PC-9 (cell line): ENCODE measurements at regions of chr17 and their contacts with region 1.

Region 1: GRCh38 chr17:5111402-5112204 is at the start of gene ZNF232:
- DNase-seq: peak; percentile 86 to 97
- H3K4me3 ChIP-seq: peak within 1 kb of the TSS; percentile 86
- H3K27ac ChIP-seq: peak within 1 kb of the TSS; percentile 27; the same call in 1 of the 2 replicates
- H3K4me1 ChIP-seq: peaks cover 8% of the 10 kb centered on the region; the same call in 1 of the 2 replicates
- H3K27me3 ChIP-seq: no peaks in the 10 kb centered on the region
- CTCF ChIP-seq: no peak
- total RNA-seq, gene ZNF232: 10.3 TPM in 2 replicates

Region 2: GRCh38 chr17:5078106-5079028 is 33.2 kb before region 1 on chr17 and contains the start of gene ZFP3:
- CTCF ChIA-PET with region 1: no interaction called
- POLR2A ChIA-PET with region 1: no interaction called
- intact Hi-C with region 1: loop called (anchors 1 kb)
- DNase-seq: peak; percentile 58 to 87
- H3K4me3 ChIP-seq: peak within 1 kb of the TSS; percentile 61
- H3K27ac ChIP-seq: no peak within 1 kb of the TSS
- H3K4me1 ChIP-seq: no peaks in the 10 kb centered on the region
- H3K27me3 ChIP-seq: peaks cover 3% of the 10 kb centered on the region; the same call in 1 of the 2 replicates
- CTCF ChIP-seq: no peak
- total RNA-seq, gene ZFP3: 2.3 and 4.5 TPM in 2 replicates

Region 3: DNA sequence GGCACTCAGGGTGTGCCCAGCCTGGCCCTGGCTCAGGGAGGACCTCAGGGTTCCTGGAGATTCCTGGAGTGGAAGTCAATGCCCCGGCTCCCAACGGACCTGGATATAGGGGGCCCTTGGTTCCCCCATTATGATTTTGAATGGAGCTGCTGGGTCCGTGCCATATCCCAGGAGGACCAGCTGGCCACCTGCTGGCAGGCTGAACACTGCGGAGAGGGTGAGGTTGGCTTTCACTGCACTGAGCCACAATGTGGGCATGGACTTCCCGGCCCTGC is 27.8 kb after region 1 on chr17:
- CTCF ChIA-PET with region 1: no interaction called
- POLR2A ChIA-PET with region 1: no interaction called
- intact Hi-C with region 1: no loop called
- DNase-seq: no peak
- H3K4me3 ChIP-seq: no peak overlapping the region
- H3K27ac ChIP-seq: no peak overlapping the region
- H3K4me1 ChIP-seq: no peaks in the 10 kb centered on the region
- H3K27me3 ChIP-seq: peaks cover 74% of the 10 kb centered on the region
- CTCF ChIP-seq: no peak

Region 4: GRCh38 chr17:5191541-5192417 is 80.2 kb after region 1 on chr17 and contains the start of gene ZNF594:
- CTCF ChIA-PET with region 1: no interaction called
- POLR2A ChIA-PET with region 1: interaction called, 3 read pairs
- intact Hi-C with region 1: loop called (anchors 1 kb)
- DNase-seq: peak; percentile 89 to 98
- H3K4me3 ChIP-seq: peak within 1 kb of the TSS; percentile 66
- H3K27ac ChIP-seq: peak within 1 kb of the TSS; percentile 22; the same call in 1 of the 2 replicates
- H3K4me1 ChIP-seq: peaks cover 5% of the 10 kb centered on the region; the same call in 1 of the 2 replicates
- H3K27me3 ChIP-seq: no peaks in the 10 kb centered on the region
- CTCF ChIP-seq: peak; percentile 71
- total RNA-seq, gene ZNF594: 14.0 and 18.4 TPM in 2 replicates

Region 5: DNA sequence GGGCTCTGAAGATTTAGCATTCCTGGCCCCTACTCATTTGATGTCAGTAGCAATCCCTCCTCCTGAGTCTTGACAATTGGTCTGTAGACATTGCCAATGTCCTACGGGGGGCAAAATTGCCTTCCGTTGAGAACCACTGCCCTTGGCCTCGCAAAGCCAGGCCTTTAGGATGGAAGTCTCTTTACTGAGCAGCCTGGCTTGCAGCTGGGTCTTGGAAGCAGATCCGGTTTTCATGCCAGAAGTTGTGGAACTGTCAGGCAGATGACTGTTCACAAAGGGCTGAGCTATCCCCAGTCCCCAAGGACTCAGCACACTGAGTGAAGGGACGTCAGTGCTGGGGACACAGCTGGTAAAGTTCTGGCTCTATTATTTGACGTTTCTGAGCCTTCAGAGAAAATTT is 1041.8 kb after region 1 on chr17:
- CTCF ChIA-PET with region 1: no interaction called
- POLR2A ChIA-PET with region 1: interaction called, 33 read pairs
- intact Hi-C with region 1: no loop called
- DNase-seq: no peak
- H3K4me3 ChIP-seq: no peak overlapping the region
- H3K27ac ChIP-seq: no peak overlapping the region
- H3K4me1 ChIP-seq: no peaks in the 10 kb centered on the region
- H3K27me3 ChIP-seq: peaks cover 75% of the 10 kb centered on the region
- CTCF ChIP-seq: no peak